ENCODE measurements at regions of chr10 and their contacts with region 1.

Region 1: GRCh38 chr10:79463578-79464496 is 18.4 kb upstream of the ZCCHC24 start:
- DNase-seq: no peak
- H3K4me3 ChIP-seq: no peak overlapping the region
- H3K4me3 Mint-ChIP-seq: no peak overlapping the region
- H3K27ac ChIP-seq: no peak overlapping the region
- H3K27ac Mint-ChIP-seq: no peak overlapping the region
- H3K4me1 ChIP-seq: no peaks in the 10 kb centered on the region
- H3K4me1 Mint-ChIP-seq: peaks cover 0 to 1% (median 0%) of the 10 kb centered on the region in 4 donors
- H3K27me3 ChIP-seq: no peaks in the 10 kb centered on the region
- H3K27me3 Mint-ChIP-seq: peaks cover 0 to 3% of the 10 kb centered on the region in 2 donors

Region 2: GRCh38 chr10:79219322-79219957 is 244.4 kb before region 1 on chr10:
- CTCF ChIA-PET with region 1: no interaction called
- POLR2A ChIA-PET with region 1: no interaction called
- intact Hi-C with region 1: loop called (anchors 10 kb)
- DNase-seq: no peak
- H3K4me3 ChIP-seq: no peak overlapping the region
- H3K4me3 Mint-ChIP-seq: no peak overlapping the region
- H3K27ac ChIP-seq: no peak overlapping the region
- H3K27ac Mint-ChIP-seq: no peak overlapping the region
- H3K4me1 ChIP-seq: no peaks in the 10 kb centered on the region
- H3K4me1 Mint-ChIP-seq: peaks cover 0 to 5% (median 3%) of the 10 kb centered on the region in 4 donors
- H3K27me3 ChIP-seq: no peaks in the 10 kb centered on the region
- H3K27me3 Mint-ChIP-seq: no peaks in the 10 kb centered on the region

Region 3: GRCh38 chr10:79400146-79401004 is 63.5 kb before region 1 on chr10:
- CTCF ChIA-PET with region 1: interaction called, 9 read pairs
- POLR2A ChIA-PET with region 1: no interaction called
- intact Hi-C with region 1: loop called (anchors 1 kb)
- DNase-seq: peak in 3 of 5 donors; percentile 11 to 31 (median 28)
- H3K4me3 ChIP-seq: no peak overlapping the region
- H3K4me3 Mint-ChIP-seq: no peak overlapping the region
- H3K27ac ChIP-seq: no peak overlapping the region
- H3K27ac Mint-ChIP-seq: no peak overlapping the region
- H3K4me1 ChIP-seq: no peaks in the 10 kb centered on the region
- H3K4me1 Mint-ChIP-seq: peaks cover 0 to 3% (median 0%) of the 10 kb centered on the region in 4 donors
- H3K27me3 ChIP-seq: no peaks in the 10 kb centered on the region
- H3K27me3 Mint-ChIP-seq: no peaks in the 10 kb centered on the region

Region 4: DNA sequence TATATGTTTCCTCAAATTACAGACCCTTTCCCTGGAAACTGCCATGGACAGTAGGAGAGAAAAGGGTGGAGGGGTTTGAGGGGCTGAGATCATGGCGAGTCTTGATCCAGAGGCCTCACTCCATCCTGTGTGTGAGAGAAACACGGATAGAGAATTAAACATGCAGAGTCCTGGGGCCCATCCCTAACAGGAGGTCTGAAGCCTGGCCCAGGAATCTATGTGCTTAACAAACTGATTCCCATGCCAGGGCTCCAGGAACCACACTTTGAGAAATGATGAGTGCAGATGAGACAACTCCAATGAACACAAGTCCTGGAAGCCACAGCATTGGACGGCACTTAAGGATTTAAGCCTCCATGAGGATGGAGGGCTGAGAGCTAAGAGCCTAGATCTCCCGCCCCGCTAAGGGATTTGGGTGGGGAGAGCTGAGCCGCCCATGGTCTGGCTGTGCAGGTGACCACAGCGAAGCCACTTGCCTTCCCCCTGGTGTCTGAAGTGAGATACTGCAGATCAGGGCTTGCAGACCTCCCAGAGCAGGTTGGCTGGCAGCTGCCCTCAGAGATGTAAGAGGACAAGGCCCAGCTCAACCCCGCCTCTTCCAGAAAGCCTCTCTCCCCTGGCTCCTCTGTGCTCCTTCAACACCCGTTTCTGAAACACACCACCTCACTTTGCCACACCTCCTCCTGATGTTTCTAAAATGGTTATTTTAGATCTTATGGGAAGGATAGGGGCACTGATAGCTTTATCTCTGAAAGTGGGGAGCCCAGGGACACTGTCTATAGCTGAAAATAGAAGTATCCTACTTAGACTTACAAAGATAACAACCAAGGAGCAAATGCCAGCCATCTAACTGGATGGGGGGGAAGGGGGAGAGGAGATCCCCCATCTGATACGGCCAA is 23.7 kb after region 1 on chr10:
- CTCF ChIA-PET with region 1: no interaction called
- POLR2A ChIA-PET with region 1: no interaction called
- intact Hi-C with region 1: no loop called
- DNase-seq: peak in 4 of 5 donors; percentile 2 to 7 (median 6)
- H3K4me3 ChIP-seq: no peak overlapping the region
- H3K4me3 Mint-ChIP-seq: no peak overlapping the region
- H3K27ac ChIP-seq: no peak overlapping the region
- H3K27ac Mint-ChIP-seq: no peak overlapping the region
- H3K4me1 ChIP-seq: no peaks in the 10 kb centered on the region
- H3K4me1 Mint-ChIP-seq: no peaks in the 10 kb centered on the region
- H3K27me3 ChIP-seq: no peaks in the 10 kb centered on the region
- H3K27me3 Mint-ChIP-seq: no peaks in the 10 kb centered on the region